ENCODE measurements at regions of chr7 and their contacts with region 1.

Region 1: GRCh38 chr7:992709-993607 is 10.0 kb downstream of the CYP2W1 start:
- DNase-seq: peak; percentile 96
- ATAC-seq: peak; percentile 84

Region 2: DNA sequence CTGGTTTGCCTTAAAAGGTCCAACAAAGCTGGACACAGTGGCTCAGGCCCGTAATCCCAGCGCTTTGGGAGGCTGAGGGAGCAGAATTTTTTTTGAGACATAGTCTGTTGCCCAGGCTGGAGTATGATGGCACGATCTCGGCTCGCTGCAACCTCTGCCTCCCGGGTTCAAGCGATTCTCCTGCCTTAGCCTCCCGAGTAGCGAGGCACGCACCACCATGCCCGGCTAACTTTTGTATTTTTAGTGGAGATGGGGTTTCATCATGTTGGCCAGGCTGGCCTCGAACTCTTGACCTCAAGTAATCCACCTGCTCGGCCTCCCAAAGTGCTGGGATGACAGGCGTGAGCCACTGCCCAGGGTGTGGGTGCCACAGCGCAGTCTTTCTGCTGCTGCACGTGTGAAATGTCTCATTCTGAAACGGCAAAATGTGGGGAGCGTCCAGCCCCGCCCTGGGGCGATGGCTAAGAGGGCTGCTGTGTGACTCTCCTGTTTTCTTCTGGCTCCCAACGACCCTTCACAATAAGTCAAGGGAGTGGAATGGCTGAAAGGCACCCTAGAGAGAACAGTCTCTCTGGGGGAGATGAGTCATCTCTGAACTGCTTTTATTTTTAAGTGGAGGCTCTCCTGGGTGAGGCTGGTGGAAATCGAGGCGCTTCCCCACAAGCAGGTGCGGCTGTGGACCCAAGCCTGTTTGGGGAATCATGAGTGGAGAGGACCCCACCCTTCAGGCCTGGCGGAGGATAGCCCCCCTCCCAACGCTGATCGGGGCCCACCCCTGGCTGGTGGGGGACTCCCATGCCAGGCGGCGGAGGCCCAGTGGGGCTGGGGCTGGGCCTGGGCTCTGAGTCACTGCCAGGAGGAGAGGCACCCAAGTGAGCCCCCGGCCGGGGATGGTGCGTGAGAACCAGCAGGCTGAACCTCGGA is 56.6 kb before region 1 on chr7:
- intact Hi-C with region 1: no loop called
- DNase-seq: peak; percentile 4 to 22
- ATAC-seq: peak; percentile 25

Region 3: GRCh38 chr7:1059200-1060091 is 66.5 kb after region 1 on chr7:
- intact Hi-C with region 1: loop called in 1 of 2 experiments (anchors 5 kb)
- DNase-seq: no peak
- ATAC-seq: peak; percentile 39

Region 4: DNA sequence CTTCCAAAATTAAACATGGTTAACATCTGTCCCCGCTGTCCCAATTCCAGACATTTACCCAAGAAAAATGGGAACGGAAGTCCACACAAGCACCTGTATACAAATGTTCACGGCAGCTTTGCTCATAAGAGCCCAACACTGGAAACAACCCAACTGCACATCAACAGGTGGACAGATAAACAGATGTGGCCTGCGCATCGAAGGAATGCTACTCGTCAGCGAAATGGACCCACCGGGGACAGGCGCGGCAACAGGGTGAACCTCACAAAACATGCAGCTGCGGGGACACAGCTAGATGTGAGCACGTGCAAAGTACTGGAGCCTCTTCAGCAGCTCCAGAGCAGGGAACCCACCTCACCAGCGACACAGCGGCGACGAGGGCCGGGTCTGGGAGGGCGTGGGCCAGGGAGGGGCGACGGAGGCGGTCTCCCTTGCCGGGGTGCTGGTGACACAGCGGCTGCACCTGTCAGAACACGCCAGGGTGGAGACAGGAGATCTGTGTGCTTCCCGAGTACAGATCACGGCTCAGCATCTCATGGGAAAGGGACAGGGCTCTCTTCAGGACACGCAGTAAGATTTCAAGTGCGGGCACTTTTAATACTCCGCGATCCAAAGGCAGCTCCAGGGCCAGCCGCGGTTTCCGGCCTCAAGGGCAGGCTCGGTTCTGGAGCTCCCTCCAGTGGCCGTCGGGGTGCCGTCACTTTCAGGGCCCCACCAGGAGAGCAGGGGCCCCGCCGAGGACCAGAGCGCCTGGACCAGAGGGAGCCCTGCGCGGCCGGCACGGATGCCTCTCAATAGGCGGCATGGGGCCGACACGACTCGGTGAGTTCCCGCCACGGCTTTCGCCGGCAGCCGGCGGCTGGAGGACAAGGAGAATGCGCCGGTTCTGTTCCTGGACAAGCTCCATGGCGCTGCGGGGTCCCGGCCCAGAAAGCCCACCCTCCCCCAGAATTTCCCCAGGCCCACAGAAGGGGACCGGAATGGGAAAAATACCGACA is 72.6 kb after region 1 on chr7:
- intact Hi-C with region 1: loop called (anchors 5 kb)
- DNase-seq: peak; percentile 74 to 91
- ATAC-seq: peak; percentile 98

Measured in left colon (tissue), 2 donors.